Spleen (tissue), 13 donors: ENCODE measurements at regions of chr15 and their contacts with region 1.

Region 1: DNA sequence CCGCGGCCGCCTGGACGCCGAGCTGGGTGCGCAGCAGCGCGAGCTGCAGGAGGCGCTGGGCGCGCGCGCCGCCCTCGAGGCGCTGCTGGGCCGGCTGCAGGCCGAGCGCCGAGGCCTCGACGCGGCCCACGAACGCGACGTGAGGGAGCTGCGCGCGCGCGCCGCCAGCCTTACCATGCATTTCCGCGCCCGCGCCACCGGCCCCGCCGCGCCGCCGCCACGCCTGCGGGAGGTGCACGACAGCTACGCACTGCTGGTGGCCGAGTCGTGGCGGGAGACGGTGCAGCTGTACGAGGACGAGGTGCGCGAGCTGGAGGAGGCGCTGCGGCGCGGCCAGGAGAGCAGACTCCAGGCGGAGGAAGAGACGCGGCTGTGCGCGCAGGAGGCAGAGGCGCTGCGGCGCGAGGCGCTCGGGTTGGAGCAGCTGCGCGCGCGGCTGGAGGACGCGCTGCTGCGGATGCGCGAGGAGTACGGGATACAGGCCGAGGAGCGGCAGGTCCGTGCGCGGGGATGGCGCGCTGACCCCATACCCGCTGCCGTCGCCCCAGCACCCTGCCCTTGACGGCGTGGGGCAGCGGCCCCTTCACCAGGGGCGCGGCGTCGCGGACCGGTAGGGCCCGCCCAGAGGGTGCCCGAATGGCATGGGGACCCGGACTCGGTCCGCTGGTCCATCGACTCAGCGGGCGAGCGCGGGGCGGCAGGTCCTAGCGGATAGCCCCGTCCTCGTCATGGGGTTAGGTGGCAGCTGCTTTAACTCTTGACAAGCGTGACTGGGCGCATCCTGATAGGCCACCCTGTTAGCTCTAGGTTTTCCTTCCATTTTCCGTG is 848 bp downstream of the SYNM start:
- DNase-seq: peak; percentile 82
- H3K4me3 ChIP-seq: peak overlapping the region; percentile 16 to 77 (median 50)
- H3K27ac ChIP-seq: peak overlapping the region in 3 of 8 donors; percentile 27 to 68 (median 60)
- H3K4me1 ChIP-seq: peaks cover 5 to 43% (median 28%) of the 10 kb centered on the region in 6 donors
- H3K27me3 ChIP-seq: peaks cover 0 to 81% (median 46%) of the 10 kb centered on the region in 7 donors
- CTCF ChIP-seq: no peak
- POLR2A ChIP-seq: no peak

Region 2: GRCh38 chr15:99213187-99213811 is 107.6 kb after region 1 on chr15:
- intact Hi-C with region 1: loop called (anchors 2 kb)
- DNase-seq: peak; percentile 82
- H3K4me3 ChIP-seq: no peak overlapping the region
- H3K27ac ChIP-seq: no peak overlapping the region
- H3K4me1 ChIP-seq: no peaks in the 10 kb centered on the region
- H3K27me3 ChIP-seq: no peaks in the 10 kb centered on the region
- CTCF ChIP-seq: peak; percentile 50 to 87 (median 75)
- POLR2A ChIP-seq: no peak